Esophagus squamous epithelium (tissue), 5 donors: ENCODE measurements at regions of chr5 and their contacts with region 1.

Region 1: DNA sequence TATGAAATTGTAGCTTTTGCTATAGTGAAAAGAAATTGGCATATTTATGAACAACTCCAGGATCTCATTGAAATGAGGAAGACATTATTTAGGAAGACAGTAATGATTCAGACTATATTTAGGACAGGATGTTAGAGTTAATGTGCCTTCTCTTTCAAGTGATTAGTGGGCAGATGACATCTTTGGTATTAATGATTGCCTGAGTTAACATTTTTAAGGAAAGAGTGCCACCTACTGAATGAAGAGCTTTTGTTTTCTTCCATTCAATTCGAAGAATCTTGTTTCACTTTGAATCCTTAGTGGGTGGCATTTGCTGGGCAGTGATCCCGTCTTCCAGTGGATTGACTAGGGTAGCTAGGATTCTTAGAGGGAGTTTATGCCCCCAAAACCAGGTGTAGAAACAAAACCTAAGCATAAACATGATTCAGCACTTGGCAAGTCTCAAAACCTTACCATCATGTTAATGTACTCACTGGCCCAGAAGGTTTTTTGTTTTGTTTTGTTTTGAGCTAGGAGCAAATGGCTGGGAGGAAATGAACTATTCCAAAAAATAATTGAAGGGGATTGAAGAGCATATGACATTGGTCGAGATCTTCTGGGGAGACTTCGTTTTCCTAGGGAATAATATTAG is 23.2 kb downstream of the MAP3K1 start:
- DNase-seq: no peak
- H3K4me3 ChIP-seq: peak overlapping the region in 1 of 4 donors; percentile 41
- H3K27ac ChIP-seq: peak overlapping the region; percentile 33 to 77 (median 50)
- H3K4me1 ChIP-seq: peaks cover 18 to 95% (median 27%) of the 10 kb centered on the region in 3 donors
- H3K27me3 ChIP-seq: no peaks in the 10 kb centered on the region
- CTCF ChIP-seq: peak; percentile 29 to 70 (median 53)
- POLR2A ChIP-seq: no peak

Region 2: DNA sequence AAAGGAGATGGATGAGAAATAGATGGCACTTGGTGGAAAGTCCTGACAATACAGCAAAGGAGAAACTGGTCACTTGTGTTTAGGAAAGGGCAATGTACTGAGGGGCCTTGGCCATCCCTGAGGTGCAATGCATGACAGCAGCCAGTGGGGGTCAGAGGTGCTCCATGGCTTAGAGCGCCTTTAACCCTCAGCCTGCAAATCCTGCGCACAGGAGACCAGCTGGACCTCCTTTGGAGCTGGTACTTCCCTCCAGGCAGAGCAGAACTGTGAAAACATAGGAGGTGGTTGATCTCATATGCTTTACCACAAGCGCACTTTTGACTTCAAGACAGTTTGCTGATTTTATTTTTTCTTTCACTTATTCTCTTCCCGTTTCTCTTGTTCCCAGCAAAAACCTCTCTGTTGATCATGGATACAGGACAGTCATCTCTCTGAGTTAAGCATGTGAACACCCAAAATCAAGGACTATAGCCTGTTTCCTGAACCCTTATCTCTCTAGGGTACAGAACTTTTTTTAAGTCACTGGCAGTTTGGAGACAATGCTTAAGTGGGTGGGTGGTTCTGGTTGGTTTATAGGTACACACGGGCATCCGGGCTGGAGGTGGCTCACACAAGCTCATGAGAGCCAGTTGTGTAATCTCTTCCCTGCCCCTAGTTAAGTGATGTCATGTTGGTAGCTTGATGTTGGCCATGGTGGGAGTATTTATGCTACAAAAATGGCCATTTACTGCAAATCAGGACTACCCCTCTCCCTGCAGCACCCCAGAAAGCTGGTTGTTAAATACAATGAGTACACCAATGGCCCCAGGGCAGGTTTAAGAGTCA is 567.7 kb before region 1 on chr5:
- intact Hi-C with region 1: loop called (anchors 5 kb)
- DNase-seq: peak; percentile 26
- H3K4me3 ChIP-seq: no peak overlapping the region
- H3K27ac ChIP-seq: peak overlapping the region in 2 of 4 donors; percentile 17 to 30
- H3K4me1 ChIP-seq: peaks cover 6 to 13% (median 11%) of the 10 kb centered on the region in 3 donors
- H3K27me3 ChIP-seq: no peaks in the 10 kb centered on the region
- CTCF ChIP-seq: peak; percentile 88 to 99 (median 96)
- POLR2A ChIP-seq: no peak